Transverse colon (tissue), 4 donors: ENCODE measurements at regions of chr22 and their contacts with region 1.

Region 1: GRCh38 chr22:22486132-22486899 is 22.2 kb downstream of the ZNF280B start:
- DNase-seq: no peak
- H3K4me3 ChIP-seq: no peak overlapping the region
- H3K27ac ChIP-seq: no peak overlapping the region
- H3K4me1 ChIP-seq: no peaks in the 10 kb centered on the region
- H3K27me3 ChIP-seq: no peaks in the 10 kb centered on the region
- CTCF ChIP-seq: no peak
- EP300 ChIP-seq: no peak
- POLR2A ChIP-seq: no peak

Region 2: DNA sequence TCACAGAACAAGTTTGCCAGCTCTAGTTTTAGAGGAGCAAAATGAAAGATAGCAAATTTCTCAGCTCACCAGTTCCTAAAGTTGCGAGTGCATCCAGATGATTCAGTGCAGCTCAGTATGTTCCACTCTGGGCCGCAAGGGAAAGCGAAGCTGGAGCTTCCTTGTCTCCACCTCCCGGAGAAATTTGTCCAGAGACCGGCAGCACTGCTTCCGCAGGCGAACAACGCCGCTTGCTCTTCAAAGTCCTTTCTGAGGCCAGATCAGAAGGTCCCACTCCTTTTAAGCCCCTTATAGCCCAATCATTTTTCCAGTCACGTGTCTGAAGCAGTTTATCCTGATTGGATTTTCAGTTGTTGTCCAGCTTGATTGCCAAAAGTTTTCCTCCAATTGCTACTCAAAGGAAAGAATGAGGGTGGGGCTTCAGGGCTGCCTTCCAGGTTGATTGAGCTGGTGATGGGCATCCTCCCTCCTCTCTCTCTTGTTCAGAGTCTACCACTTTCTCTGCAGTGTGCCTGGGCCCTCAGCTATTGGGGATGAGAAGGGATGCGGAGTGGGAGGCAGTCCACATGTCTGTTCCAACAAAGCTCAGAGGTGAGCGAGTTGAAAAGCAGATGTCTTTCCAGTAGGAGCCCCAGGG is 33.8 kb after region 1 on chr22 and contains the start of gene ZNF280A:
- in situ Hi-C with region 1: no loop called
- intact Hi-C with region 1: loop called (anchors 1 kb)
- DNase-seq: no peak
- H3K4me3 ChIP-seq: no peak within 1 kb of the TSS
- H3K27ac ChIP-seq: no peak within 1 kb of the TSS
- H3K4me1 ChIP-seq: no peaks in the 10 kb centered on the region
- H3K27me3 ChIP-seq: peaks cover 17% of the 10 kb centered on the region
- CTCF ChIP-seq: no peak
- EP300 ChIP-seq: no peak
- POLR2A ChIP-seq: no peak
- total RNA-seq, gene ZNF280A: not detected